OCI-LY7 (cell line): ENCODE measurements at regions of chr9 and their contacts with region 1.

Region 1: DNA sequence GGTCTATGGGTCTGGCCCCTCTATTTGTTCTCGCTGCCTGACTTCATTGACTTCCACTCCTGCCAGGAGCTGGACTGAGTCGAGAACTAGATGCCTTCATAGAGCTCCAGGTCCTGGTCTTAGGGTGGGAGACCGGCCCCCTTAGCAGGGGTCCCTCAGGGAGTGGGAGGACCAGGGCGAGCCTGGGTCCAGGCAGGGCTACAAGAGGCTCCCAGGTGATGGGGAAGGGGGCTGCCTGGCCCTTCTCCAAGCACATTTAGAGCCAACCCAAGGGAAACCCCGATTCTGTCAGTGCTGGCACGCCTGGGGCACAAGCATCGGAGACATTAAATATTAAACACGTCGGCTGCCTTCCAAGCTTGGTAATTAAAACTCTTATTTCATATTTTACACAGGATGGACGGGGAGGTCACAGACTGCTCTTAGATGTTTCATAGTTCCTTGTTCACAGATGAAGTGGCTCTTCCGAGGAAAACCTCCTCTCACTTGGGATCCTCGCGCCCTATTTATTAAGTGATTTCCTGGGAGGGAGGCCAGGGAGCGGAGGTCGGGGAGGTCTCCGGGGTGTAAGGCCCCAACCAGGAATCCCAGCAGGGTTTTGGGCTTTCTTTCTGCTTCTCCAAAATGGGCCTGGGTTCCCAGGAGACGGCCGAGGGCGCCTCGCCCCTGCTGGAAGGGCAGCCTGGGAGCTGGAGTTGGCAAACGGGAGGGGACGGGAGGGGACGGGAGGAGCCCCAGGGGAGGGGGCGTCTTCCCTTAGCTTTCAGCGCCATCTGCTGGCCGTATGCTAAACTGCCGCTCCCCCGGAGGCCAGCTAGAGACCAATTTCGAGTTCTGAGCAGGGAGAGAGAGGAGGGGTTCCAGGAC is 23.4 kb upstream of the ZBTB43 start:
- DNase-seq: peak; percentile 69
- H3K4me3 ChIP-seq: no peak overlapping the region
- H3K27ac ChIP-seq: no peak overlapping the region
- H3K4me1 ChIP-seq: no peaks in the 10 kb centered on the region
- CTCF ChIP-seq: peak; percentile 93

Region 2: DNA sequence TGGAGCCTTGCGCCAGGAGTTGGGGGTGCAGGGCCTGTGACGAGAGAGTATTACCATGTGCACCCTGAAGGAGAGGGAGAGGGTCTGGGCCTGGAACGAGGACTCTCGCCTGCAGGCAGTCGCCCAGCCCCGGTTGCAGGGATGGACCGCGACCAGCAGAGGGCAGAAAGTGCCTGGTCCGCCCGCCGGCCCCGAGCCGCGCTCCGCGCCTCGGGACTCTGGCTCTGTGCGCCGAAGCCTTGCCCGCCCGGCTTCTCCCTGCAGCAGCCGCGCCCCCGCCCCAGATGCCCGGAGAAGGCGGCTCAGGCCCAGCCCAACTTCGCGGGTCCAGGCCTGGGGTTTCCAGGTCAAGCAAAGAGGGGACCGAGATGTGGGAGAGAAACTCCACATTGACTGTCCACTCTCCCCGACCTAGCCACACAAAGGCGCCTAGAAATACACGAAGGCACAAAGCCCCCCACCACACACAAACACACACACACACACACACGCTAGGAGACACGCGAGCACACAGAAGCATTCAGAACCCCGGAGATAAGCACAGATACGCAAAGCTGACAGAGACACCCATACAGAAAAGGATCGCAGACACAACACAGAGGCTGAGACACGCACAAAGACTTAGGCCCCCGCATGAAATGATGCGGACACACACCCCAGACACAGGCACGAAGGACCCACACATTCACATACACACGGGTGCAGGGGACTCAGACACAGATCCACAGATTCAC is 169.7 kb before region 1 on chr9:
- CTCF ChIA-PET with region 1: no interaction called
- POLR2A ChIA-PET with region 1: no interaction called
- intact Hi-C with region 1: loop called (anchors 5 kb)
- DNase-seq: peak; percentile 46
- H3K4me3 ChIP-seq: no peak overlapping the region
- H3K27ac ChIP-seq: no peak overlapping the region
- H3K4me1 ChIP-seq: no peaks in the 10 kb centered on the region
- CTCF ChIP-seq: peak; percentile 77

Region 3: DNA sequence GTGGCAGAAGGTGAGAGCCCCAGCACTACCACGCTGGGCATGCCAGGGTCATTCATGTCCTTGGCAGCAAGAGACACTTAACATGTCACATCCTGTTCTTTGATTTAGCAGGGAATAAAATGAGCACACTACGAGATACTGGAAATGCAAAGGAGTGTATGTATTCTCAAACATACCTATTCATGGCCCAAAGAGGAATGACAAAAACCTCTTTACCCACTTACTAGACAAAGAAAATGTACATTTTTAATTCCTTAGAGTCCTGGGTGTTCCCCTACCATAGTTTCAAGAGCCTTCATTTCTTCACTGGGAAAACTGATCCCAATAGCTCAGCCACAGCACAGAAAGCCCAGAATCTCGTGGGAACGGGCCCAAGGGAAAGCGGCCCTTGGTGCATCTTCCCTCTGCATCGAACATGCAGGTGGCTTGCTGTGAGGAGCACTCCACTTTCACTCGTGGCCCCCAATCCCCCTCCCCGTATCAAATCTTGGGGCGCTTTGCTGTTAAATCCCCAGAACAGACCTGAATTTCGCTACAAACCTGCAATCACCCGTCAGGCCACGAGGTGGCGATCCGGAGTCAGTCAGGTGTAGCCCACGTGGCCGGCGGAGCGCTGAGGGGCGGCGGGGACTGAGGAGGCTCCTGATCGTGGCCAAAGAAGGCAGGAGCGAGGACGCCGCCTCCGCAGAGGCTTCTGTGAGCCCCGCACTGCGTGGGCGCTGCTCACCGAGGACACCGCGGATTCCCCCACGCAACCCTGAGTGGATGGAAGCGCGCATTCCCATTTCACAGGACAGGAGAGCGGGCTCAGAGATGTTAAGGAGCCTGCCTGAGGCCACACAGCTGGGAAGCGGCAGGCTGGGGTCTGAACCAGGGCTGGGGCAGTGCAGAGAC is 76.3 kb before region 1 on chr9:
- CTCF ChIA-PET with region 1: interaction called, 14 read pairs
- POLR2A ChIA-PET with region 1: interaction called, 4 read pairs
- intact Hi-C with region 1: loop called (anchors 1 kb)
- DNase-seq: peak; percentile 79
- H3K4me3 ChIP-seq: no peak overlapping the region
- H3K27ac ChIP-seq: no peak overlapping the region
- H3K4me1 ChIP-seq: no peaks in the 10 kb centered on the region
- CTCF ChIP-seq: peak; percentile 86